HEK293 (cell line): ENCODE measurements at regions of chr17 and their contacts with region 1.

Region 1: GRCh38 chr17:31378638-31379037 is 12.8 kb upstream of the RAB11FIP4 start:
- H3K4me3 ChIP-seq: no peak overlapping the region
- H3K27ac ChIP-seq: no peak overlapping the region
- H3K4me1 ChIP-seq: no peaks in the 10 kb centered on the region
- CTCF ChIP-seq: no peak

Region 2: GRCh38 chr17:31448467-31449077 is 69.9 kb after region 1 on chr17:
- CTCF ChIA-PET with region 1: no interaction called
- POLR2A ChIA-PET with region 1: interaction called, 11 read pairs
- H3K4me3 ChIP-seq: no peak overlapping the region
- H3K27ac ChIP-seq: no peak overlapping the region
- H3K4me1 ChIP-seq: no peaks in the 10 kb centered on the region
- CTCF ChIP-seq: no peak